HepG2 (cell line): ENCODE measurements at regions of chr2 and their contacts with region 1.

Region 1: DNA sequence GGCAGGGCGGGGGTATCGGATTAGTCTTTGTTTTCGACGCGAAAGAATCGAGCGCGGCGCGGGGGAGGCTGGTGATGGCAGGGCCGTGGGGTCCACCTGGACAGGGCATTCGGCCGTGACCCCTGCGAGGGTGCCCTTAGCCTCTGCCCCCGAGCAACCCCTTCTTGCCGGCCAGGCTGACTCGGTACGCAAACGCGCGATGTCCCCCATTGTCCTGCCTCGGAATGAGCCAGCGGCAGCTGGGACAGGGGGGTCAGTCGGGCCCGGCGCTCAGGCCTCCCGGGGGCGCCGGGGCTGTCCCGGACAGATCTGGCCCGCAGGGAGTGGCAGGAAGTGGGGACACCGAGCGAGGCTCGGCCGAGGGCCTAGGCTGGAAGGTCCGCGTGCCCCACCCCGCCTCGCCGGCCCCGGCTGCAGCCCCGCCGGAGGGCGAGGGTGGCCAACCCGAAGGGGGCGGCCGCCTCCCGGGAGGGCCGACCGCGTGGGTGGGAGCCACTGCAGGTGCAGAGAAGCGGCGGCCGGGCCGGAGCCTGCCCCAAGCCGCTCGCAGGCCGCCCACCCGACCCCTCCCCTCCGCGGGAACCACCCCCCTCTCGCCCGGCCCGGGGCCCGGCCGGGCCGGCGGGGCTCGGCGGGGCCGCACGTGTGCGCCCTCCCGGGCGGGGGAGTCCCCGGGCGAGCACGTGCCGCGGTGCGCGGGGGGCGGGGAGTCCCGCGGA is at the start of gene TET3:
- DNase-seq: no peak
- ATAC-seq: peak; percentile 32
- H3K4me3 ChIP-seq: peak within 1 kb of the TSS; percentile 67 to 80 (median 76)
- H3K27ac ChIP-seq: peak within 1 kb of the TSS; percentile 80
- H3K4me1 ChIP-seq: peaks cover 85% of the 10 kb centered on the region
- H3K27me3 ChIP-seq: peaks cover 0 to 31% of the 10 kb centered on the region in 2 experiments; a peak in 1 of 5 replicates
- CTCF ChIP-seq: 0 out of 2 replicates have a peak, but pooled peaks have one; percentile 3
- EP300 ChIP-seq: no peak
- POLR2A ChIP-seq: no peak; a peak in 3 of 4 replicates
- RAD21 ChIP-seq: peak; percentile 47
- total RNA-seq, gene TET3: 6.8 TPM in 2 replicates

Region 2: DNA sequence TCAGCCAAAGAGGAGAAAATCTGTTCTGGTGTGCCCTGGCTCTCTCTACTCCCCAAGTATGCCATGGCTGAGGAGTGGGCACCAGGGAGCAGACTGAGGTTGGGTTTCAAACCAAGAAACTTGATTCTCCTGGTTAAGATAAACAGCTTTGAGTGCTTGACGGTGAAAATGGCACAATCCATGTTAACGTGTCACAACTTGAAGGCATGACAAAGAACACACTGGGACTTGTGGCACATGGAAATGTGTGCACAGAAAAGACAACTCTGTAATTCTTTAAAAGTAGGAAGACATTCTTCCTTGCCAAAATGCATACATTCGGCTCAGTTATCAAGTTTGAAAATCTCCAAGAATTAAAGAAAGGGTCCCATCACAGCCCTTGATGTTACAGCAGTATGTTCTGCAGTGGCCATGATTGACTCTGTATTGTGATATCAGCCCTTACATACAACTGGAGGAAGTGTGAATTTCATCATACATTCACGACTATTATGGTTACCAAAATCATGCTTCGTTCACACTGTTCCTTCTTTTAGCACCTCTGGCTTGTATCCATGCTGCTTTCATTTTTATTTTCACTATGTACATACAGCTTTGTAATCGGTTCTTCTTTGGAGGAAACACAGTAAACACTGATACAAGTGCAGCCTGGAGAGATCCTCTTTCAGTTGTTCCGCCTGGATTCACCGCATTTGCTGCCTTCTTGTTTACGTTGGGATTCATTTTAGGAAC is 107.1 kb before region 1 on chr2:
- CTCF ChIA-PET with region 1: no interaction called
- POLR2A ChIA-PET with region 1: no interaction called
- in situ Hi-C with region 1: no loop called
- intact Hi-C with region 1: loop called (anchors 5 kb)
- DNase-seq: no peak
- ATAC-seq: peak; percentile 54
- H3K4me3 ChIP-seq: no peak overlapping the region
- H3K27ac ChIP-seq: no peak overlapping the region
- H3K4me1 ChIP-seq: peaks cover 25% of the 10 kb centered on the region
- H3K27me3 ChIP-seq: no peaks in the 10 kb centered on the region
- CTCF ChIP-seq: no peak
- EP300 ChIP-seq: no peak
- POLR2A ChIP-seq: no peak
- RAD21 ChIP-seq: no peak

Region 3: DNA sequence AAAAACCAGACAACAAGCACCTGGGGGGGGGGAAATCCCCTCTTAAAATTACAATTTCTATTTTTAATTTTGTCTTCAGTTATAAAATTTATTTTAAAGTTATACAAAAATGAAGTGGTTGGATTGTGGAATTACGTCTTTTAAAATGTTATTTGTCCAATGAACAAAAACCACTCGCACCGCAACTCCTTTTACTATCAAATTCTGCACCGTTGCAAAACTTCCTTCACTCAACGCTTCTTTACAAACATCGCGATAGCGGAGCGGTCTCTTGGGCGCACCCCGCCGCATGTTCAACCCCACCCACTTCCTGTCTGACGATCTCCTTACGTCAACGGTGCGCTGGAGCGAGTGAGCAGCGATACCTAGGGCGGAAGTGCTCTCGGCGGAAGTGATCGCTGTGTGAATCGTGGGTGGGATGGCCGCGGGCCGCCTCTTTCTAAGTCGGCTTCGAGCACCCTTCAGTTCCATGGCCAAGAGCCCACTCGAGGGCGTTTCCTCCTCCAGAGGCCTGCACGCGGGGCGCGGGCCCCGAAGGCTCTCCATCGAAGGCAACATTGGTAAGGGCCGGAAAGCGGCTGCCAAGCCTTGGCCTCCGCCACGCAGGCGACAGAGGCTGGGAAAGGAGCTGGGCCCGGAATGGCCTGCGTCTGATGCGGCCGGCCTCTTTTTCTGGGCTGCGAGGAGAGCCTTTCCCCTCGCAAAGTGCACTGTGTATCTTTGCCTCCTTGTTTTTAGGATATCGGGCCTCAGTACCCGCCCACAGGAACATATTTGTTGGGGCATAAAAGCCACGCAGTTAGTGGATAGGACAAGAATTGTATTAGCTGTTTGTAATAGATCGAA is 57.6 kb before region 1 on chr2 and contains the start of gene DGUOK:
- CTCF ChIA-PET with region 1: no interaction called
- POLR2A ChIA-PET with region 1: no interaction called
- in situ Hi-C with region 1: no loop called
- intact Hi-C with region 1: loop called (anchors 5 kb)
- DNase-seq: peak; percentile 99
- ATAC-seq: peak; percentile 99
- H3K4me3 ChIP-seq: peak within 1 kb of the TSS; percentile 76 to 91 (median 82)
- H3K27ac ChIP-seq: peak within 1 kb of the TSS; percentile 78
- H3K4me1 ChIP-seq: peaks cover 44% of the 10 kb centered on the region
- H3K27me3 ChIP-seq: peaks cover 0 to 5% of the 10 kb centered on the region in 2 experiments; a peak in 2 of 5 replicates
- CTCF ChIP-seq: no peak
- EP300 ChIP-seq: peak; percentile 49 to 64; a peak in 2 of 4 replicates
- POLR2A ChIP-seq: peak; percentile 95 to 97
- RAD21 ChIP-seq: peak; percentile 69
- total RNA-seq, gene DGUOK: 105 and 130 TPM in 2 replicates

Region 4: GRCh38 chr2:74001781-74002486 is 17.6 kb after region 1 on chr2:
- CTCF ChIA-PET with region 1: no interaction called
- POLR2A ChIA-PET with region 1: interaction called, 12 read pairs
- in situ Hi-C with region 1: no loop called
- intact Hi-C with region 1: no loop called
- DNase-seq: no peak
- ATAC-seq: 0 out of 3 replicates have a peak, but pooled peaks have one; percentile 2
- H3K4me3 ChIP-seq: peak overlapping the region in 2 of 3 experiments; percentile 38 to 72; a peak in 4 of 6 replicates
- H3K27ac ChIP-seq: no peak overlapping the region
- H3K4me1 ChIP-seq: peaks cover 30% of the 10 kb centered on the region
- H3K27me3 ChIP-seq: no peaks in the 10 kb centered on the region
- CTCF ChIP-seq: no peak
- EP300 ChIP-seq: no peak
- POLR2A ChIP-seq: no peak
- RAD21 ChIP-seq: no peak